ENCODE measurements at regions of chr1 and their contacts with region 1.

Region 1: GRCh38 chr1:29124366-29125236 is 898 bp upstream of the TMEM200B start:
- DNase-seq: peak; percentile 95
- H3K4me3 ChIP-seq: peak overlapping the region; percentile 48 to 75 (median 72)
- H3K27ac ChIP-seq: peak overlapping the region; percentile 96 to 99 (median 99)
- H3K4me1 ChIP-seq: peaks cover 0 to 46% (median 44%) of the 10 kb centered on the region in 4 donors
- H3K27me3 ChIP-seq: no peaks in the 10 kb centered on the region
- CTCF ChIP-seq: peak; percentile 98 to 100 (median 98)
- EP300 ChIP-seq: peak in 3 of 4 donors; percentile 23 to 75 (median 29)
- POLR2A ChIP-seq: peak; percentile 83 to 93

Region 2: DNA sequence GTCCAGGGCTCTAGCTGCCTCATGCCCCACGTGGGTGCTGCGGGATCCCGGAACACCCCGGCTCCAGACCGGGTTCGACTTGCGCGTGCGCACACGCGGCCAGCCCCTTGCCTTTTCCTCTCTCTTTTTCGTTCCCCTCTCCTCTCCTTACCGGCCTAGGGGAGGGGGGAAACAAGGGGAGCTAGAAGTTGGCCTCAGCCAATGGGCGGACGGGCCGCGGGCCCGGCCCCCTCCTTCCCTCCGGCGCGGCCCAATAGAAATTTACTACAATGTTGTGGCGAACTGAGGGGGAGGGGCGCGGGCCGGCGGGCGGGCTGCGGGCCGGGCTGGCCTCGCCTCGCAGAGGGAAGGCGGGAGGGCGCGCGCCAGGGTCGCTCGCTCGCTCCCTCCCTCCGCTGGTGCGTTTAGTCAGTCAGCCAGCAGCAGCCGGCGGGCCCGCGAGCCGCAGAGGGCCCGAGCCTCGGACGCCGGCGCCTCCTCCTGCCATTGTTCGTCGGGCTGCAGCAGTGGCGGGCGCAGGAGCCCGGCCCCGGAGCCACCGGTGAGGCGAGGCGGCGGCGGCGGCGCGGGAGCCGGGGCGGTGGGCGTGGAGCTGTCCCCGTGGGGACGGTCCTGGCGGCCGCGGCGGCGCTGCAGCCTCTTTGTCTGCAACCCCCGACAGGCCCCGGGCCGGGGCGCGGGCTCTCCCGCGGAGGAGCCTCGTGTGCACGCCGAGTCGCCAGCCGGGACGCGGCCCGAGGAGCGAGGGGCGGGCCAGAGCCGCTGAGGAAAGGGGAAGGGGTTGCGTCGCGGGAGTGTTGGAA is 210.2 kb before region 1 on chr1 and contains the start of gene EPB41:
- intact Hi-C with region 1: loop called (anchors 10 kb)
- DNase-seq: peak; percentile 95
- H3K4me3 ChIP-seq: peak within 1 kb of the TSS; percentile 40 to 89 (median 63)
- H3K27ac ChIP-seq: peak within 1 kb of the TSS; percentile 66 to 78 (median 72)
- H3K4me1 ChIP-seq: peaks cover 0 to 15% (median 9%) of the 10 kb centered on the region in 4 donors
- H3K27me3 ChIP-seq: no peaks in the 10 kb centered on the region
- CTCF ChIP-seq: no peak
- EP300 ChIP-seq: peak in 1 of 4 donors; percentile 18
- POLR2A ChIP-seq: no peak
- total RNA-seq, gene EPB41: 23.2 to 33.4 (median 27.4) TPM

Region 3: GRCh38 chr1:29050166-29050565 is 74.4 kb before region 1 on chr1:
- intact Hi-C with region 1: loop called (anchors 5 kb)
- DNase-seq: no peak
- H3K4me3 ChIP-seq: no peak overlapping the region
- H3K27ac ChIP-seq: peak overlapping the region in 2 of 4 donors; percentile 11 to 16
- H3K4me1 ChIP-seq: peaks cover 0 to 37% (median 19%) of the 10 kb centered on the region in 4 donors
- H3K27me3 ChIP-seq: no peaks in the 10 kb centered on the region
- CTCF ChIP-seq: no peak
- EP300 ChIP-seq: no peak
- POLR2A ChIP-seq: no peak

Region 4: GRCh38 chr1:29083317-29084195 is 41.0 kb before region 1 on chr1:
- intact Hi-C with region 1: loop called (anchors 5 kb)
- DNase-seq: no peak
- H3K4me3 ChIP-seq: peak overlapping the region; percentile 5 to 31 (median 23)
- H3K27ac ChIP-seq: peak overlapping the region in 3 of 4 donors; percentile 67 to 80 (median 79)
- H3K4me1 ChIP-seq: peaks cover 0 to 45% (median 19%) of the 10 kb centered on the region in 4 donors
- H3K27me3 ChIP-seq: no peaks in the 10 kb centered on the region
- CTCF ChIP-seq: no peak
- EP300 ChIP-seq: peak in 2 of 4 donors; percentile 3 to 78
- POLR2A ChIP-seq: no peak

Region 5: GRCh38 chr1:29181413-29182225 is 57.0 kb after region 1 on chr1 and contains the start of gene SRSF4:
- intact Hi-C with region 1: loop called (anchors 1 kb)
- DNase-seq: peak; percentile 100
- H3K4me3 ChIP-seq: peak within 1 kb of the TSS; percentile 80 to 97 (median 92)
- H3K27ac ChIP-seq: peak within 1 kb of the TSS; percentile 98 to 100 (median 99)
- H3K4me1 ChIP-seq: peaks cover 0 to 49% (median 46%) of the 10 kb centered on the region in 4 donors
- H3K27me3 ChIP-seq: no peaks in the 10 kb centered on the region
- CTCF ChIP-seq: peak in 3 of 4 experiments; percentile 50 to 66 (median 64)
- EP300 ChIP-seq: no peak
- POLR2A ChIP-seq: peak; percentile 18 to 35
- total RNA-seq, gene SRSF4: 80.3 to 110 (median 96.6) TPM

Region 6: DNA sequence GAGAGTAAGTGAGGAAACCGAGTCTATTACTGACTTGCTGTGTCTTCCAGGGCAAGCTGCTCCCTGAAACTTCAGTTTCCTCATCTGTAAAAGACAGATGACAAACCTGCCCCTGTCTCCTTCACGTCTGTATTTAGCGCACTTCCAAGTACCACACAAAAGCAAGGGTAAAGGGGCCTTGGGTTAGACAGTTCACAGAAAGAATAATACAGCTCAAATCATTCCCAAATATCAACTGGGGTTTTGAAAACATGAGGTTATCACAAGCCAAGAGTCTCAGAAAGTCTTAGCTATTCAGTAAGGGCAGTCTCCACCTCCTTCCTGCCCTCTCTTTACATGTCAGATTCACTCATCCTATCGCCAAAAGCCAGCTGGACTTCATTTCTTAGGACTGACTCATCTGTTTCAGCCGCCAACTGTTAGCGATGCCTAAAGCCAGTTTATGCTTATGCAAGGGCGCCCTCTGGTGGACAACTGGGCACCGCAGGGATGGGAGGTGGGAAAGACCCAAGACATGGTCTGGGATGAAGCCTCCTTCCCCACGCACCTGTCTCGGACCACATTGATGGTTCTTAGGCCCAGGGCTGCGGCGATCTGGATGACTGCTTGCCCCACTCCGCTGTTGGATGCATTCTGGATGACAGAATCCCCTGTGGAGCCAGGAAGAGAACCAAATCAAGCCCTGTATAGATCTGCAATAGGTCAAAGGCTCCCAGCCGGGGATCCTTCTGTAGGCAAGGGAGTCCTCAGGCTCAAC is 78.2 kb after region 1 on chr1:
- intact Hi-C with region 1: loop called (anchors 2 kb)
- DNase-seq: peak; percentile 98
- H3K4me3 ChIP-seq: no peak overlapping the region
- H3K27ac ChIP-seq: peak overlapping the region; percentile 79 to 87 (median 84)
- H3K4me1 ChIP-seq: peaks cover 0 to 13% (median 12%) of the 10 kb centered on the region in 4 donors
- H3K27me3 ChIP-seq: no peaks in the 10 kb centered on the region
- CTCF ChIP-seq: peak; percentile 89 to 96 (median 92)
- EP300 ChIP-seq: no peak
- POLR2A ChIP-seq: no peak

Region 7: DNA sequence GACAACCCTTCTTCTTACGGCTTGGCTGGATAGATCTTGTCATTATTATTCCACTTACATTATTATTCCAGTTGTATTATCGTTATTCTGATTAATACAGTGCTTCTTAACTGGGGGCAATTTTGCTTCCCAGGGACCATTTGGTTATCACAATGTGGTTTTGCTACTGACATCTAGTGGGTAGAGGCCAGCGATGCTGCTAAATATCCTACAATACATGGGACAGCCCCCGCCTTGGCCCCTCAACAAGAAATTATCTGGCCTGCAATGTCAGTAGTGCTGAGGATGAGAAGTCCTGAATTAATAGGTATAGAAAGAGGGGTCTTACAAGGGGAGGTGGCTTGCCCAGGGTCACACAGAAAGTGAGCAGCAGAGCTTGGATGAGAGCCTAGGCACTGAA is 217.3 kb after region 1 on chr1:
- intact Hi-C with region 1: no loop called
- DNase-seq: no peak
- H3K4me3 ChIP-seq: no peak overlapping the region
- H3K27ac ChIP-seq: no peak overlapping the region
- H3K4me1 ChIP-seq: no peaks in the 10 kb centered on the region
- H3K27me3 ChIP-seq: peaks cover 0 to 28% (median 0%) of the 10 kb centered on the region in 3 donors
- CTCF ChIP-seq: no peak
- EP300 ChIP-seq: no peak
- POLR2A ChIP-seq: no peak

Region 8: DNA sequence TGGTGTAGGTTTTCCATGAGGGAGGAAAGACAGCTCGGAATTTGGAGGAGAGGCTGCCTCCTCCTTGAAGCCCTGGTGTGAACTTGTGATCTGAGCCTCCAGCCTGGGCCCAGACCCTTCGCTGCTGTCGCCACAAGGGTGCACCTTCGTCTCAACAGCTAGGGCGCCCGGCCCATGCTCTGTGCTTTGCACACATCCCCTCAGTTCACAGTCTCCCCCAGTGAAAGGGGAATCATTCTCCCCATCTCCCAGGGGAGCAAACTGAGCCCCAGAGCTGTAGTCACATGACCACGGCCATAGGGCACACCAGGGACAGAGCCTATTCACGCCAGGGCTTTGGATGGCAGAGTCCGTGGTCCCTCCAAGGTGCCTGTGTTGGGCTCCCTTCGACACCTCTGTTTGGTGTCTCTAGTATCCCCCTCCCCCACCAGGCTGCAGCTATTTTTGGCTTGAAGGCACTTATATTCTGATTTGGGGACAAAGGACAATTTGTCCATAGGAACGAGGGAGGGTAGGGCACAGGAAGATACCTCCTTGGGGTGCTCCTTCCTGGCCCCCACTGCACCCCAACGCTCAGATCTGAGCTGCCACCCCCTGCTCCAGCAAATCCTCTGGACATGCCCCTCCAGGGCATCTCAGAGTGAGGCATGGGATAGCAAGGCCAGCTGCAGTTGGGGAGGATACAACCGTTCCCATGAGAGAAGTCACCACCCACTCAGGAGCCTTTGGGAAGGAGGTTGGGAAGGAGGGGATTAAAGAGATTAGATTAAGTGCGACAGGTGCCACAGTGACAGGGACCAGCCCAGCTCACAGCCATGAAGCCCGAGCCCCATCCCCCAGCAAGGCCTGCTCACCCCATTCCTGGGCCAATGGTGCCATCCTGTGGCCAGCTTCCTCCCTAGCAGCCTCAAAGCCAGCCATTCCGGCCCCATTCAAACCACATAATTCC is 1583.1 kb after region 1 on chr1:
- intact Hi-C with region 1: loop called (anchors 10 kb)
- DNase-seq: peak; percentile 87
- H3K4me3 ChIP-seq: no peak overlapping the region
- H3K27ac ChIP-seq: no peak overlapping the region
- H3K4me1 ChIP-seq: peaks cover 0 to 44% (median 36%) of the 10 kb centered on the region in 4 donors
- H3K27me3 ChIP-seq: no peaks in the 10 kb centered on the region
- CTCF ChIP-seq: peak; percentile 81 to 94 (median 90)
- EP300 ChIP-seq: no peak
- POLR2A ChIP-seq: no peak

Measured in sigmoid colon (tissue), 7 donors.